ENCODE measurements at regions of chr4 and their contacts with region 1.

Region 1: DNA sequence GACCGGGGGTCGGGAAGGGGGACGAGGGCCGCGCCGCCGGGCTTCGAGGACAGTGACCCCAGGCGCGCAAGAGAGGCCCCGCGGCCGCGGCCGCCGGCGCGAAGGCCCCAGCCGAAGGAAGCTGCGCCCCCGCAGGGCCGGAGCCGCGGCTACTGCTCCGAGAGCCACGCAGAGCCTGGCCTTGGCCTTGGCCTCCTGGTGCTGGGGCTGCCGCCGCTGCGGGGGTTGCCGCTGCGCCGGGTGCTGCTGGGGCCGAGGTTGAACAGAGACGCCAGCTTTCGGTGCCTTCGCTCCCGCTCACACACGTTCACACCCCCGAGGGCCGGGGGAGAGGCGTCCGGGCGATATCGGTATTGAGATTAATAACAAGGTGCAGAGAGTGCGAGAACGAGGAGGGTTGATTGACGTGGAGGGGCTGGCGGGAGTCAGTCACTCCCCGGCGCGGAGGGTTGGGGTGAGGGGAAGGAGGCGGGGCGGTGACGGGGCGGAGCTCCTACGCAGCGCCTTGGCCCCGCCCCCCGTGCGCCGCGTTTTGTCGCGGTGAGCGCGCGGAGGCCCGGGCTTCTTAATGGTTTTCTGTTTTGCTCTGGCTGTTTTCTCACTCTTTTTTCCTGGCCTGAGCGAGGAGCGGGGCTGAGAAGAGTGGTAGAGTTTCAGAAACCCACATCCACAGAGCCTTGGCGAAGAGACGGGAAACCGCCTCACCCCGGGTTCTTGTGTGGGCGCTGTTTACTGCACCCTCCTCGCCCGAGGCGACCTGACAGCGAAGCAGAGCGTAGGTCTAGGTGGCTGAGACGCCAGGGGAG is 878 bp upstream of the CNOT6L start:
- DNase-seq: peak; percentile 97
- ATAC-seq: peak; percentile 86
- H3K4me3 Mint-ChIP-seq: peak overlapping the region; percentile 96
- H3K27ac Mint-ChIP-seq: peak overlapping the region; percentile 99
- H3K4me1 Mint-ChIP-seq: peaks cover 41% of the 10 kb centered on the region
- H3K27me3 Mint-ChIP-seq: no peaks in the 10 kb centered on the region
- CTCF ChIP-seq: no peak

Region 2: GRCh38 chr4:77715414-77716290 is 104.4 kb before region 1 on chr4:
- CTCF ChIA-PET with region 1: no interaction called
- POLR2A ChIA-PET with region 1: interaction called, 3 read pairs
- intact Hi-C with region 1: loop called (anchors 5 kb)
- DNase-seq: no peak
- ATAC-seq: peak; percentile 75
- H3K4me3 Mint-ChIP-seq: peak overlapping the region; percentile 20
- H3K27ac Mint-ChIP-seq: peak overlapping the region; percentile 84
- H3K4me1 Mint-ChIP-seq: peaks cover 45% of the 10 kb centered on the region
- H3K27me3 Mint-ChIP-seq: no peaks in the 10 kb centered on the region
- CTCF ChIP-seq: no peak

Region 3: DNA sequence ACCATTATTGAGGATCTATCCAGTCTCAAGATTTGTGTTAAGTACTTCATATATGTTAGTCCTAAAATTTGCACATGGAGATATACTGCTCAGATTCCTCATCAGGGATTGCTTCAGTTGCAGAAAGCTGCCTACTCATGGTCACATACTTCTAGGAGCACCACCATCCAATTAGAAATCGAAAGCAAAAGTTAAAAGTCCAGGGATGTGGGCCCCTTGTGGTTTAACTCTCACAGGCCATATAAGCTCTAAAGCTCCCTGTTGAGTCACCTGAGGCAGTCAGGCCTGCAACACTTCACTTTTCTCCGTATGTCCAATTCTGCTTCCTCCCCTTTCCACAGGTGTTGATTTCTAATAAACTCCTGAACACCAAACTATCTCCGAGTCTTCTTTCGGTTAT is 85.1 kb before region 1 on chr4:
- CTCF ChIA-PET with region 1: interaction called, 4 read pairs
- POLR2A ChIA-PET with region 1: interaction called, 4 read pairs
- intact Hi-C with region 1: loop called (anchors 5 kb)
- DNase-seq: peak; percentile 67
- ATAC-seq: peak; percentile 95
- H3K4me3 Mint-ChIP-seq: peak overlapping the region; percentile 67
- H3K27ac Mint-ChIP-seq: peak overlapping the region; percentile 84
- H3K4me1 Mint-ChIP-seq: peaks cover 60% of the 10 kb centered on the region
- H3K27me3 Mint-ChIP-seq: no peaks in the 10 kb centered on the region
- CTCF ChIP-seq: no peak

Region 4: DNA sequence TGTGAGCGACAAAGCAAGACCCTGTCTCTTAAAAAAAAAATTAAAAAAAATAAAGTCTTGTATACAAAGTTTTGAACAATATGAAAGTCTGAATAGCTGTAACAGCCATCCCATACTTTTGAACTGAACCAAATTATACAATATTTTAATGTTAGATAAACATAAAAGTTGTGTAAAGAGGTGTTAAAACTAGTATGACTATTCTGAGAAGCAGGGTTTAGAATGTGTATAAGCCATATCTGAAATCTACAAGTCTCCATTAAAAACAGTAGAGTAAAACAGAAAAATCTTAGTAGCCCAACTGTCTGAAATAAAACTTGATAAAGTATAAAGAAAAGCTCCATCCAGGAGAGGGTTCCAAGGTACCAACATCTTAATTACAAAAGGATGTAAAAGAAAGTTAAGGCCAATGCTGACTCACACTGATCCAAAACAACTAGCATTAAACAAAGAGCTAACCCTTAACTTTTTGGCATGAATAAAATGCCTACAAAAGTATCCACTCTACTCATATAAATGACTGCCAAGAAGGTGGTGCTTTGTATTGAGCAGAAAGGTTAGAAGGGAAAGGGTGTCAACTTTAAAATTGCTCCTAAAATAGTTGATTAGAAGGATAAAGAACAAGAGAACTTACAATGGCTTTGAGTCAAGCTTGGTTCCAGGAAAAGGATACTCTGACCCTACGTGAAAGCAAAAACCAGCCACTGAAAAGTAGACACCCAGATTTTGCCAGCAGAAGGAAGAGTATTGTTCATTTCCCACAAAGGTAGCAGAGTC is 19.4 kb before region 1 on chr4:
- CTCF ChIA-PET with region 1: interaction called, 9 read pairs
- POLR2A ChIA-PET with region 1: interaction called, 15 read pairs
- intact Hi-C with region 1: no loop called
- DNase-seq: no peak
- ATAC-seq: peak; percentile 69
- H3K4me3 Mint-ChIP-seq: peak overlapping the region; percentile 65
- H3K27ac Mint-ChIP-seq: peak overlapping the region; percentile 90
- H3K4me1 Mint-ChIP-seq: peaks cover 71% of the 10 kb centered on the region
- H3K27me3 Mint-ChIP-seq: no peaks in the 10 kb centered on the region
- CTCF ChIP-seq: no peak

Region 5: DNA sequence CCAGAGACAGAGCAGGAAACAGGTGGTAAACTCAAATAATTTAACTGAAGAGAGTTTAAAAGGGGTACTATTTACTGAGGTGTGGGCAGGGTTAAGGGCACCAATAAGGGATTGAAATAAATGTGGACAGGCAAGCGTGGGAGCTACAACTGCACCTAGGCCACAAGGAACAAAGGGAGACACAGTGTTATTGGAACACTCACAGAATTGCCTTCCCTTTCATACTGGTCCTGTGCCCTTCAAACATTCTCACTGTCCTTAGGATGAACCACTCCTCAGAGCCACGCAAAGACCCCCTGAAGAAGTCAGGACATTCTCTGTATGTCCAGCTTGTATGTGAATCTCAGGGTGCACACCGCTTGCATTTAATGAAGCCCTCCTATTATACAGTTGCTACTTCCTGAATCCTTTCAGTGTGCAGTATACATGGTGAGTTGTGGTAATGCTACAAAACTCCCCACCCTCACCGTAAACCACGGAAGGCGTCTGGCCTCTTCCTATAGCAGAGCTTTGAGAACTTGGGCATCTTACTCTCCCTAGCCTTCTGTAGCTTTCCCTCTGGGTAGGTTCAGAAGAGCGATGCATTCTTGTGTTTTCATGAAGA is 32.9 kb after region 1 on chr4:
- CTCF ChIA-PET with region 1: interaction called, 12 read pairs
- POLR2A ChIA-PET with region 1: interaction called, 49 read pairs
- intact Hi-C with region 1: loop called (anchors 1 kb)
- DNase-seq: peak; percentile 87
- ATAC-seq: peak; percentile 85
- H3K4me3 Mint-ChIP-seq: peak overlapping the region; percentile 64
- H3K27ac Mint-ChIP-seq: peak overlapping the region; percentile 95
- H3K4me1 Mint-ChIP-seq: peaks cover 55% of the 10 kb centered on the region
- H3K27me3 Mint-ChIP-seq: no peaks in the 10 kb centered on the region
- CTCF ChIP-seq: no peak

Region 6: DNA sequence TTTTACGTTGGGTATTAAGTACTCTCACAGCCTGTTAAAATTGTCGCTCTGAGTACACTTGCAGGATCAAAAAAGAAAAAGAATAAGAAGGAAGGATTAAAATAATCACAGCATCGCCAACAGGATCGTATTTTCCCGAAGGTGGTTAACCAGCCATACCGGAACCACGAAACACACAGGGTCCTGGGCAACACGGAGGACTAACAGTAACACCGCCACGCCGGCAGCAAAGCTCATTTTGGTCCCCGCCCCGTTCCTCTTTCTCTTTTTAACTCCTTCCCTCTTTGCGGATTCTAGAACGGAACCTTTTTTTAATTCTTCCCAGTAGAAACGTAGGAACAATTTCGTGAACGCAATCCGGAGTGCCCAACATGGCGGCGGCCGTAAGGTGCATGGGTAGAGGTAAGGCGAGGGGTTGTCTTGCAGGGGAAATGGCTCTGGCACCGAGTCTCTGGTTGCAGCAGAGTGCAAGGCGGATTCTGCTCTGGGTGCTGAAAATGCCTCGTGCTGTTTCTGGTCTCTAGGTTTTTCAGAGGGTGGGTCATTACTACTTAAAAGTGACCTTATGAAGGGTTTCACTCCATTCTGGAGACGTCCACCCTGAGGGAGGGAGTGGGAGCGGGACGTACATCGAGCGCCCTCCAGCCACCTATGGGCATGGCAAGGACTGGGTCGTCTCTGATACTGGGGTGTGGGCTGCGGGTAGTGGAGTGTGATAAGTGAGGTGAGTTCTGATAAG is 42.6 kb after region 1 on chr4 and contains the start of gene MRPL1:
- CTCF ChIA-PET with region 1: interaction called, 17 read pairs
- POLR2A ChIA-PET with region 1: interaction called, 192 read pairs
- intact Hi-C with region 1: loop called (anchors 2 kb)
- DNase-seq: peak; percentile 92
- ATAC-seq: peak; percentile 79
- H3K4me3 Mint-ChIP-seq: peak within 1 kb of the TSS; percentile 99
- H3K27ac Mint-ChIP-seq: peak within 1 kb of the TSS; percentile 100
- H3K4me1 Mint-ChIP-seq: peaks cover 55% of the 10 kb centered on the region
- H3K27me3 Mint-ChIP-seq: peaks cover 3% of the 10 kb centered on the region
- CTCF ChIP-seq: peak; percentile 40
- total RNA-seq, gene MRPL1: 55.7 to 62.4 TPM

Region 7: DNA sequence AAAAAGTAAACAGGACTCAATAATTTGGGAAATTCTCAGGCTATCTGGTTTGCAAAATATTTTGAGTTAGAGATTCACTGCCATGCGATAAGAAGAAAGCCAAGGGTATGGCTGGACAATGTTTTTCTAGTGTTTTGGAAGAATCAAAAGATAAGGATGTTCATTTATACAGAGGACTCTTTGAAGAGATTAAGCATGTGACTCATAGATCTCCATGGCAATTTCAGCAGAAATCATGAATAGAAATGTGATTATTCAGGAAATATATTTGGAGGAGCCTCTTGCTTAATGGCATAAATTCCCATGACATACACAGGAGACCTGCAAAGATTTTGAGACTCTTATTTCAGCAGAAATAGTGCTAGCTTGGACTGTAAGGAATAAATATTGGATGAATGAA is 220.4 kb after region 1 on chr4:
- CTCF ChIA-PET with region 1: no interaction called
- POLR2A ChIA-PET with region 1: no interaction called
- intact Hi-C with region 1: no loop called
- DNase-seq: no peak
- ATAC-seq: no peak
- H3K4me3 Mint-ChIP-seq: no peak overlapping the region
- H3K27ac Mint-ChIP-seq: no peak overlapping the region
- H3K4me1 Mint-ChIP-seq: no peaks in the 10 kb centered on the region
- H3K27me3 Mint-ChIP-seq: peaks cover 2% of the 10 kb centered on the region
- CTCF ChIP-seq: no peak

Measured in activated CD8-positive, alpha-beta T cell treated with anti-CD3 and anti-CD28 coated beads for 36 hours (primary cell).